CD4-positive, alpha-beta memory T cell (primary cell): ENCODE measurements at regions of chr7 and their contacts with region 1.

Region 1: GRCh38 chr7:38222481-38223096 is 44.5 kb downstream of the STARD3NL start:
- DNase-seq: peak in 4 of 5 donors; percentile 52 to 61 (median 58)
- H3K4me3 ChIP-seq: no peak overlapping the region
- H3K4me3 Mint-ChIP-seq: peak overlapping the region in 1 of 8 donors; percentile 1
- H3K27ac ChIP-seq: no peak overlapping the region
- H3K27ac Mint-ChIP-seq: peak overlapping the region in 6 of 7 donors; percentile 0 to 79 (median 53)
- H3K4me1 ChIP-seq: peaks cover 46% of the 10 kb centered on the region
- H3K4me1 Mint-ChIP-seq: peaks cover 20 to 68% (median 40%) of the 10 kb centered on the region in 4 donors
- H3K27me3 ChIP-seq: no peaks in the 10 kb centered on the region
- H3K27me3 Mint-ChIP-seq: no peaks in the 10 kb centered on the region

Region 2: DNA sequence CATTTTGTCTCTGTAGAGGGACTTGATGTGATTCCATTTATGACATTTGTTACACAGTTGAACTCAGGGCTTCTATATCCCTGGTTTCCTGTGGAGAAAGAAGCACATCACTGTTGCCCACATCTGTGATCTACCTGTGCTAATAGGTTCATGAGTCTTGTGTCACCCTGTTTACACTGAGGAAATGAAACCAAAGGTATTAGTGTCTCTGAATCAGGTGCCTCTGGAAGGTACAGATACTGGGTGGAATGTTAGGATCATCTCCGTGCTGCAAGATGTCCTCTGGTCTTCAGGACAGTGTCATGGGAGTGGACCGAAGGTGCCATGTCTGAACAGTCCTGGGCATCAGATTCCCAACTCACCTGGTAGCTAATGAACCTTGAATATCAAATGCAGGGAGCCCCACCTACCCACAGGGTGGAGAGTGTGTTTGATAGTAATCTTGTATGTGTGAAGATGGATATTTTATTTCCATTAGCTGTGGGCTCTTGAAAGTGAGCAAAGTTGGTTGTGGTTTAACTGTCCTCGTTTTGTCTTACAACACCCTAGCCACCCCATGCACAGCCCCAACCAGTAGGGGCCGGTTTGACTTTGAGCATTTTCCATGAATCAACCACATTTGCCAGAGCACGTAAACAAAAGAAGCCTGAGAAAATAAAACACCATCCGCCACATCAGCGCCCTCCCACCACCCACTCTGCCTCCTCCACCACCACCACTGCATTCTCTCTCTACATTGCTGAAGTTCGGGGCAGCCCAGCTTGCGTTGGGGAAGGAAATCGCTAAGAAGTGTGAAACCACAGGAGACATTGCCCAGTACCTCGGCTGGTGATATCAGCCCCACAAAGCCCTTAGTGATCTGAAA is 10.1 kb after region 1 on chr7:
- CTCF ChIA-PET with region 1: interaction called, 60 read pairs
- POLR2A ChIA-PET with region 1: interaction called, 51 read pairs
- intact Hi-C with region 1: loop called (anchors 1 kb)
- DNase-seq: peak; percentile 79 to 91 (median 89)
- H3K4me3 ChIP-seq: peak overlapping the region in 1 of 2 donors; percentile 38
- H3K4me3 Mint-ChIP-seq: peak overlapping the region; percentile 39 to 88 (median 82)
- H3K27ac ChIP-seq: peak overlapping the region; percentile 61
- H3K27ac Mint-ChIP-seq: peak overlapping the region; percentile 91 to 96 (median 96)
- H3K4me1 ChIP-seq: peaks cover 77% of the 10 kb centered on the region
- H3K4me1 Mint-ChIP-seq: peaks cover 27 to 96% (median 67%) of the 10 kb centered on the region in 4 donors
- H3K27me3 ChIP-seq: no peaks in the 10 kb centered on the region
- H3K27me3 Mint-ChIP-seq: no peaks in the 10 kb centered on the region

Region 3: GRCh38 chr7:38506756-38507155 is 284.2 kb after region 1 on chr7:
- CTCF ChIA-PET with region 1: no interaction called
- POLR2A ChIA-PET with region 1: no interaction called
- intact Hi-C with region 1: no loop called
- DNase-seq: no peak
- H3K4me3 ChIP-seq: no peak overlapping the region
- H3K4me3 Mint-ChIP-seq: no peak overlapping the region
- H3K27ac ChIP-seq: no peak overlapping the region
- H3K27ac Mint-ChIP-seq: no peak overlapping the region
- H3K4me1 ChIP-seq: no peaks in the 10 kb centered on the region
- H3K4me1 Mint-ChIP-seq: no peaks in the 10 kb centered on the region
- H3K27me3 ChIP-seq: no peaks in the 10 kb centered on the region
- H3K27me3 Mint-ChIP-seq: peaks cover 0 to 5% of the 10 kb centered on the region in 2 donors

Region 4: DNA sequence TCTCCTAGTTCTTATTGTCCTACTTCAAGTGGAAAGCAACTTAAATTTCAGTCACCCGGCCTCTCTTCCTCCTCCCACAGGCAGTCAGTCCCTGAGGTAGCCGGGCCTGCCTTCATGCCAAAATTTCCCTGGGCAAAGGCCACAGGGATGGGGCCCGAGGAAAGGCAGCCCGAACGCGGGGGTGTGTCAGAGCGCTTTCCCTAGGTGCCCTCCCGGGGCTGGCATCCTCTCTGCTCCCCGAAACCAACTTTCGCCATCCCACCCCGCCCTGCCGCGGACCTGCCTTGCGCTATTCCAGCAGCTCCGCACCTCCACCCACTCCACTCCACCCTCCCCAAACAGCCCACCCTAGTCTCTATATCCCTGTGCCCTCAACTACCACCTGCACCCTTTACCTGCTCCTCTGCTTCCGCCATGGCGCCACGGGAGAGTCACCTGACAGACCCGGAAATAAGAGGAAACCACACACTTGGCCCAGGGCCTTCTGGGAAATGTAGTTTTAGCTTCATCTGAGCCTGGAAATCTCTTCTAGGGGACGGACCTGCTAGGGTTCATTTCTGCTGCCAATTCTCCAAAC is 686.3 kb after region 1 on chr7 and contains the start of gene VPS41:
- CTCF ChIA-PET with region 1: no interaction called
- POLR2A ChIA-PET with region 1: no interaction called
- intact Hi-C with region 1: loop called (anchors 5 kb)
- DNase-seq: peak; percentile 83 to 88 (median 84)
- H3K4me3 ChIP-seq: peak within 1 kb of the TSS; percentile 75 to 82
- H3K4me3 Mint-ChIP-seq: peak within 1 kb of the TSS; percentile 93 to 100 (median 99)
- H3K27ac ChIP-seq: peak within 1 kb of the TSS; percentile 51
- H3K27ac Mint-ChIP-seq: peak within 1 kb of the TSS; percentile 84 to 99 (median 96)
- H3K4me1 ChIP-seq: peaks cover 17% of the 10 kb centered on the region
- H3K4me1 Mint-ChIP-seq: peaks cover 18 to 38% (median 29%) of the 10 kb centered on the region in 4 donors
- H3K27me3 ChIP-seq: no peaks in the 10 kb centered on the region
- H3K27me3 Mint-ChIP-seq: peaks cover 0 to 2% of the 10 kb centered on the region in 2 donors
- total RNA-seq, gene VPS41: 68.3 to 73.3 TPM